ENCODE measurements at regions of chr2 and their contacts with region 1.

Region 1: DNA sequence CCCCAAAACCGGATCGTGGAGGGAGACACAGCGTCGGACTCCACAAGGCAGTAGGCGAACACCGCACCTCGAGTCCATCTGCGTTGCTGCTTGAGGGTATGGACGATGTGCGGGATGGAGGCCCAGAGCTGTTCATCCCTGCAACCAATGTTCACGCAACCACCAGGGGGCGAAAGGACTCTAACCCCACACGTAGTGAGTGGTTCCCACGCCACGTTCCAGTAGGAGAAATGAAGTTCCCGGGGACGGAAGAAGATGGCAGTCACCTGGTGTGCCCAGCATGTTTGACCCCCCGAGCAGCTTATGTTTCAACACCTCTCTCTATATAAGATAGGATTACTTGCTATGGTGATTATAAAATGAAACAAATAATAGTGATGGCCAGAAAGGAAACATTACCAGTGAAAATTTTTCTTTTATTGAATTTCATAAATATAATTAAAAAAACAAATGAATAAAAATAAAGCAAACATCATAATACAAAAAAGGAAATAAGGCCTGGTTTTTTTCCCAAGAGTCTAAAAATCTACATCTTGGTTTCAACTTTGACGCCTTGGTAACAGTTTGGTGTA is 184.3 kb downstream of the SH3BP4 start:
- DNase-seq: peak; percentile 79 to 80
- ATAC-seq: peak; percentile 79 to 92 (median 88)
- H3K4me3 ChIP-seq: no peak overlapping the region
- H3K27ac ChIP-seq: no peak overlapping the region
- H3K4me1 ChIP-seq: peaks cover 0 to 4% (median 0%) of the 10 kb centered on the region in 9 donors
- H3K27me3 ChIP-seq: peaks cover 0 to 11% (median 0%) of the 10 kb centered on the region in 7 donors
- CTCF ChIP-seq: peak; percentile 23 to 83 (median 75)

Region 2: DNA sequence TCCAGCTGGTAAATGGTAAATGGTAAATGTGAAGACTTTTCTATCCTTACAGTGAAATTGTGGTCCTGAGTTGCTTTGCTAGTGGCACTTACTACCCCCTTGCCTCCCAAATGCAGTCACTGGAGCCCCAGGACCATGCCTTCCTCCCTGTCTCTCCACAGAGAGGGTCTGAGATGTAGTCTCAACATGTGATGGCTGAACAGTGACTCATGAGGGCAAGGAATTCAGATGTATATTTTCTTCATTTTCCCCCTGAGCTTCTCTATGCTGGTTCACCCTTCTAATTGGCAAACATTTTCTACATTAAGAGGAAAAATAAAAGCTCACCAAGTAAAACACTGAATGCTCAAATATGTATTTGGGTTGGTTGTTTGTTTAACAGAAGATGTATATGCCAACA is 47.7 kb after region 1 on chr2:
- intact Hi-C with region 1: no loop called
- DNase-seq: no peak
- ATAC-seq: no peak
- H3K4me3 ChIP-seq: no peak overlapping the region
- H3K27ac ChIP-seq: no peak overlapping the region
- H3K4me1 ChIP-seq: no peaks in the 10 kb centered on the region
- H3K27me3 ChIP-seq: peaks cover 5 to 38% (median 12%) of the 10 kb centered on the region in 7 donors
- CTCF ChIP-seq: no peak

Region 3: GRCh38 chr2:235493775-235494715 is 358.0 kb after region 1 on chr2 and contains the start of gene AGAP1:
- intact Hi-C with region 1: loop called in 3 of 10 experiments (anchors 5 to 10 kb)
- DNase-seq: peak; percentile 87 to 92
- ATAC-seq: peak; percentile 87 to 93 (median 92)
- H3K4me3 ChIP-seq: peak within 1 kb of the TSS; percentile 54 to 90 (median 68)
- H3K27ac ChIP-seq: peak within 1 kb of the TSS; percentile 44 to 87 (median 82)
- H3K4me1 ChIP-seq: peaks cover 8 to 42% (median 25%) of the 10 kb centered on the region in 9 donors
- H3K27me3 ChIP-seq: peaks cover 0 to 36% (median 0%) of the 10 kb centered on the region in 7 donors
- CTCF ChIP-seq: peak in 1 of 9 donors; percentile 9
- total RNA-seq, gene AGAP1: 17.5 to 29.2 (median 20.4) TPM

Region 4: DNA sequence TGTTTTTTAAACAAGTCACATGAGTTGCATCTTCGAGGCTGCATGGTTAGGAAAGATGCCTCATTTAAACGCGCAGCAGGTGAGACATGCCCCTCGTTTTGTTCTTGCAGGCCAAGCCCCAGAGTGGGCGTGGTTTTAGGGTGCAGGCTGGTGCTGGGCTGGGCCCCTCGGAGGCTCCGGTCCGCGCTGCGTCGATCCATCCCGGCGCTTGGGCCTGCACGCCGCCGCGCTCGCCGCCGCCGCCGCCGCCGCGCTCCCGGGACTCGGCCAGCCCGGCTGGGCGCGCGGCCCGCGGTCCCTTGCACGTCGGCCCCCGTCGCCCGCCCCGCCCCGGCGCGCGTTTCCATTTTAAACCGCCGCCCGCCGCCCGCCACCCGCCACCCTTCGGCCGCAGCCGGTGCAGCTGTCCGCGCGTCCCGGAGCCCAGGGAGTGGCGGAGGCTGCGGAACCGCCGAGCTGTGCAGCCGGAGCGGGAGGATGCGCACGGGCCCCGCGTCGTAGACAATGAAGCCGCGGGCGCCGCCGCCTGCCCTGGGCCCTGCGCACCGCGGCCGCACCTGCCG is 533.3 kb after region 1 on chr2:
- intact Hi-C with region 1: loop called in 4 of 10 experiments (anchors 5 to 10 kb)
- DNase-seq: peak; percentile 68 to 77
- ATAC-seq: peak; percentile 50 to 82 (median 72)
- H3K4me3 ChIP-seq: peak overlapping the region in 9 of 10 donors; percentile 46 to 62 (median 55)
- H3K27ac ChIP-seq: no peak overlapping the region
- H3K4me1 ChIP-seq: peaks cover 0 to 49% (median 23%) of the 10 kb centered on the region in 9 donors
- H3K27me3 ChIP-seq: peaks cover 0 to 65% (median 0%) of the 10 kb centered on the region in 7 donors
- CTCF ChIP-seq: peak in 2 of 9 donors; percentile 14 to 21